Naive thymus-derived CD8-positive, alpha-beta T cell (primary cell): ENCODE measurements at regions of chr21 and their contacts with region 1.

Region 1: GRCh38 chr21:42454786-42455580 is 41.0 kb downstream of the RSPH1 start:
- DNase-seq: no peak
- ATAC-seq: no peak
- H3K4me3 Mint-ChIP-seq: no peak overlapping the region
- H3K27ac Mint-ChIP-seq: peak overlapping the region in 1 of 10 donors; percentile 61
- H3K4me1 Mint-ChIP-seq: peaks cover 13 to 39% (median 26%) of the 10 kb centered on the region in 4 donors
- H3K27me3 Mint-ChIP-seq: no peaks in the 10 kb centered on the region

Region 2: GRCh38 chr21:42496122-42496900 is 41.3 kb after region 1 on chr21 and contains the start of gene RSPH1:
- POLR2A ChIA-PET with region 1: interaction called, 10 read pairs
- DNase-seq: peak; percentile 95 to 100 (median 99)
- ATAC-seq: peak; percentile 93 to 95
- H3K4me3 Mint-ChIP-seq: peak within 1 kb of the TSS; percentile 81 to 94 (median 90)
- H3K27ac Mint-ChIP-seq: peak within 1 kb of the TSS; percentile 77 to 98 (median 92)
- H3K4me1 Mint-ChIP-seq: peaks cover 9 to 18% (median 16%) of the 10 kb centered on the region in 4 donors
- H3K27me3 Mint-ChIP-seq: no peaks in the 10 kb centered on the region
- polyA plus RNA-seq, gene RSPH1: not detected